ENCODE measurements at regions of chr1 and their contacts with region 1.

Region 1: DNA sequence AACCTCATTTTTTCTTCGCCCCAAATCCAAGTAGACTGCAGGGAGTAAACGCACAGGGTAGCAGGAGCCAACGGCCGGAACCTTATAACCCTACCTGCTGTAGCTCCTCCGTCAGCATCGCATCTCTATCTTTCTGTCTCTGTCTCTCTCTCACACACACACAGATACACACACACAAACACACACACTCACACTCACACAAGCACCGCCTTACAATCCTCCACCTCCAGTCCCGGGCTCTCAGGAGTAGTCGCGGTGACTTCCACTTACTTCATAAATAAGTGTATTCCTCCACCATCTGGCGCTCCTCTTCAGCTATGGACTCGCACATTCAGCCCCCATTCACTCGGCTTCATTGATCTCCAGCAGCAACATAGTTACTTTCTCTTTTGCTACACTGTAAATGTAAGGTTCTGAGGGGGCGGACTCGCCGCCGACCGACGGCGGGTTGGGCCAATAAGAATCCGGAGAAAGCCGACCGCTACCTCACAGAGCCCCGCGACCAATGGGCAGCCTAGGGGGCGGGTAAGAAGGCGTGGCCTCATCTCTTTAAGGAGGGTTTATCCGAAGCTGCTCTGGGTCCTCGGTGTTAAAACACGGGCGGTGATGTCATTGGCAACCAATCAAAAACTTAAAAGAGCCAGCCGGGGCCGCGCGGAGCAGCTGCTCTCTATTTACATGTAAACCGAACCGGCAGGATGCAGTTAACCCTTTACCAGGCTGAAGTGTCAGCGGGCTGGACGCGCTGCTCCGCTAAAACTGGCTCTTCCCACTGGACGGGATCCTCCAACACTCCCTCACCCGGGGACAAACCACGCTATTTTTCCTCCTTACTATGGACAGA is at the start of gene DUSP10:
- DNase-seq: peak; percentile 94
- ATAC-seq: peak; percentile 81
- H3K4me3 Mint-ChIP-seq: no peak within 1 kb of the TSS
- H3K27ac Mint-ChIP-seq: peak within 1 kb of the TSS; percentile 65
- H3K4me1 Mint-ChIP-seq: peaks cover 20% of the 10 kb centered on the region
- H3K27me3 Mint-ChIP-seq: no peaks in the 10 kb centered on the region
- CTCF ChIP-seq: no peak
- total RNA-seq, gene DUSP10: 36.6 and 39.5 TPM in 2 replicates

Region 2: DNA sequence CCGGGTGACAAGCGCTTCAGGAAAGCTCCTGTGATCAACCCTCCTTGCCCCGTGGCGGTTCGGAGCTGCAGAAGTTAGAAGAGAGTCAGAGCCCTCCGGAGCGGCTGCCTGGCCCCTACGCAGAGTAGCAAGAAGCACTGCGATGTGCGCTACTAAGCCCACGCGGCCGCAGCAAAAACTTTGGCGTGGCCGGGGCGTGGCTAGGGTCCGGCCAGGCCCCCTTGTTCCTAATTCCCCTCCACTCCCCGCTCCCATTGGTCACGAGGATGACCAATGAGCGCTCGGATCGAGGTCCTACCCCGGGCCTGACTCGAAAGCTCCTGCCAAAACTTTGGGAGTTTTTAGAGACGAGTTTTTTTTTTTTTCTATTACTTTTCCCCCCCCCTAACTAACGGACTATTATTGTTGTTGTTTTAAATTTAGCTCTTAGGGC is 862.8 kb before region 1 on chr1 and contains the start of gene HLX:
- CTCF ChIA-PET with region 1: interaction called, 3 read pairs
- POLR2A ChIA-PET with region 1: interaction called, 10 read pairs
- intact Hi-C with region 1: loop called (anchors 2 kb)
- DNase-seq: peak; percentile 75
- ATAC-seq: peak; percentile 80
- H3K4me3 Mint-ChIP-seq: peak within 1 kb of the TSS; percentile 94
- H3K27ac Mint-ChIP-seq: peak within 1 kb of the TSS; percentile 93
- H3K4me1 Mint-ChIP-seq: peaks cover 50% of the 10 kb centered on the region
- H3K27me3 Mint-ChIP-seq: peaks cover 2% of the 10 kb centered on the region
- CTCF ChIP-seq: no peak
- total RNA-seq, gene HLX: 3.2 and 4.6 TPM in 2 replicates

Region 3: DNA sequence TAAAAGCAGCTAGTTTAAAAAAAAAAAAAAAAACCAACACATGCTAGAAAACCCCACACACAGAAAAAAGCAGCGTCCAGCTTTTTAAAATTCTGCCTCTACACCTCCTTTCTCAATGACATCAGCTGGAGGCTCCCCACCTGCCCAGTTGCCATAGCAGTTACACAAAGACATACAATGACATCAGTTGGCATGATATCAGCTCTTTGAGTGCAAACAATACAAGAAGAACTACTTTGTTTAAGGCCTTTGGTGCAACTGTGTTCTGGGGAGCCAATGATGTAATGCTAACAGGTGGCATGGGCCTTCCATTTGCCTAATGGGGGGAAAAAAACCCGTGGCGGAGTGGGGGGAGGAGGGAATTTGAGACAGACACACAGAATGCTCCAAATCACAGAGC is 32.9 kb before region 1 on chr1:
- CTCF ChIA-PET with region 1: interaction called, 3 read pairs
- POLR2A ChIA-PET with region 1: interaction called, 50 read pairs
- intact Hi-C with region 1: loop called (anchors 1 kb)
- DNase-seq: peak; percentile 20
- ATAC-seq: peak; percentile 32
- H3K4me3 Mint-ChIP-seq: peak overlapping the region; percentile 37
- H3K27ac Mint-ChIP-seq: peak overlapping the region; percentile 82
- H3K4me1 Mint-ChIP-seq: peaks cover 60% of the 10 kb centered on the region
- H3K27me3 Mint-ChIP-seq: no peaks in the 10 kb centered on the region
- CTCF ChIP-seq: no peak

Region 4: DNA sequence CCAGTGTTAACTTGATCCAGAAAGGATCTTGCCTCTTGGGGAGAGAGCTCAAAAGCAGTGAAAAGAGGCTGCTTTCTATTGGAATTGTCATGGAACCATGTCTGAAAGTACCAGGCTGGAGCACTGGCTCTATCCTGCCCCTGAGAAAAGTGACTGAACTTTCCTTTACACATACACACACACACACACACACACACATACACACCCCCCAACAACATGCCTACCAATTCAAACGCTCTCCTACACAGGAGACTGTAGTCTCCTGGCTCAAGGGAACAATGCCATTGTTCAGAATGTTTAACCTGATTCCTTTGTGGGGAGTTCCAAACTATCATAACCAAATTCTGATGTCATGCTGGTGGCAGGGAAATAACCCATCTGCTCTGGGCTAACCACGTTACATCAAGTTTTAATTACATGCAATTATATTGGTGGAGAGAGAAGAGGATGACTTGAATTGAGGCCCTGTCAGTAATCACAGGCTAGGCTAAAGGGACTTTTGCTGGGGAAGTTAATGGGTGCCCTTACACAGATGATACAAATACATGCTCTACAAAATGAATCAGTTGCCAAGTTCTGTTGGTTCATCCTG is 52.2 kb after region 1 on chr1:
- CTCF ChIA-PET with region 1: interaction called, 5 read pairs
- POLR2A ChIA-PET with region 1: interaction called, 79 read pairs
- intact Hi-C with region 1: loop called (anchors 1 kb)
- DNase-seq: no peak
- ATAC-seq: peak; percentile 80
- H3K4me3 Mint-ChIP-seq: peak overlapping the region; percentile 83
- H3K27ac Mint-ChIP-seq: peak overlapping the region; percentile 97
- H3K4me1 Mint-ChIP-seq: peaks cover 55% of the 10 kb centered on the region
- H3K27me3 Mint-ChIP-seq: no peaks in the 10 kb centered on the region
- CTCF ChIP-seq: no peak

Region 5: DNA sequence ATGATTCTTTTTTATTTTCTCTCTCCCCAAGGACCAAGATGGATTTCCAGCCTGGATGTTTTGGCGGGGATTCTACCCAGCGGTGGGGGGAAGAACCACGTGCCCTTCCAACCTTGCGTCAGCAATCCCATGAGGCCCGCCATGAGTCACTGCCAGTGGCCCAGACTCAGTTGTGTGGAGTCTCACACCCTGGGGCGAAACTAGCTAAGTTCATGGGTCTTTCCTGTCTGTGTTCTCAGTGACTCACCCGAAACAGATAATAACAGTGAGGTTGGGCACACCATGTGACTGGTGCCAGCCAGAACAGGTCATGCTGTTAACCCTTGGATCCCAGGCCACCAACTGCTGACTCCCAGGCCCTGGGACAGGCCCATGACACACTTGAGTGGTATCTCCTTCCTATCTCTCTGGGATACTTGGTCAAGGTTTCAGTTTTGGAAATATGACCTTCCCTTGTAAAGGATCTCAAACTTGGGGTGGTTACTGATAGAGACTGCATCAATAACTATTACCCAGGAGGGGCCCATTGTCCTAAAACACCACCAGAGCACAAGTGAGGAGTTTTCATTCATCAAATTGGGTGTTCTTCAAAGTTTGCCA is 98.0 kb after region 1 on chr1:
- CTCF ChIA-PET with region 1: interaction called, 19 read pairs
- POLR2A ChIA-PET with region 1: interaction called, 132 read pairs
- intact Hi-C with region 1: loop called (anchors 1 kb)
- DNase-seq: peak; percentile 80
- ATAC-seq: peak; percentile 80
- H3K4me3 Mint-ChIP-seq: peak overlapping the region; percentile 29
- H3K27ac Mint-ChIP-seq: peak overlapping the region; percentile 95
- H3K4me1 Mint-ChIP-seq: peaks cover 50% of the 10 kb centered on the region
- H3K27me3 Mint-ChIP-seq: no peaks in the 10 kb centered on the region
- CTCF ChIP-seq: no peak

Region 6: DNA sequence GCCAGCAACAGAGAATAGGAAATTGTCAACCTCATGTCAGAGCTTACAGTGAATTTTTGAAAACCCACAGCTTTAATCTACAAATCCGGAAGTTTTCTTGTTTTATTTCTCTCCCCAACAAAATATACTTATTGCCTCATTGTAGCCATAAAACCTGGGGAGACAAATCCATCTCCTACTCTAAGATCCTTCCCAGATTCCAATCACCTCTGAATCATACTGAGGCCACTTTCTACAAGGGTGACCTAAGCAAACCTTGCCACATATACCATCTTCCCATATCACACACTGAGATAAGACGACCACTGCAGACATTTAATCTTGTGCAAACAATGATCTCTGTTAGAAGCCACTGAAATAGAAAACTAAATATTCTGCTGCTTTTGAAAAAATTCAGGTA is 171.4 kb after region 1 on chr1:
- CTCF ChIA-PET with region 1: no interaction called
- POLR2A ChIA-PET with region 1: no interaction called
- intact Hi-C with region 1: no loop called
- DNase-seq: no peak
- ATAC-seq: no peak
- H3K4me3 Mint-ChIP-seq: no peak overlapping the region
- H3K27ac Mint-ChIP-seq: no peak overlapping the region
- H3K4me1 Mint-ChIP-seq: peaks cover 16% of the 10 kb centered on the region
- H3K27me3 Mint-ChIP-seq: no peaks in the 10 kb centered on the region
- CTCF ChIP-seq: no peak

Region 7: GRCh38 chr1:222095606-222096475 is 353.9 kb after region 1 on chr1:
- CTCF ChIA-PET with region 1: no interaction called
- POLR2A ChIA-PET with region 1: no interaction called
- intact Hi-C with region 1: loop called (anchors 10 kb)
- DNase-seq: no peak
- ATAC-seq: peak; percentile 82
- H3K4me3 Mint-ChIP-seq: no peak overlapping the region
- H3K27ac Mint-ChIP-seq: no peak overlapping the region
- H3K4me1 Mint-ChIP-seq: no peaks in the 10 kb centered on the region
- H3K27me3 Mint-ChIP-seq: peaks cover 7% of the 10 kb centered on the region
- CTCF ChIP-seq: peak; percentile 53

Region 8: DNA sequence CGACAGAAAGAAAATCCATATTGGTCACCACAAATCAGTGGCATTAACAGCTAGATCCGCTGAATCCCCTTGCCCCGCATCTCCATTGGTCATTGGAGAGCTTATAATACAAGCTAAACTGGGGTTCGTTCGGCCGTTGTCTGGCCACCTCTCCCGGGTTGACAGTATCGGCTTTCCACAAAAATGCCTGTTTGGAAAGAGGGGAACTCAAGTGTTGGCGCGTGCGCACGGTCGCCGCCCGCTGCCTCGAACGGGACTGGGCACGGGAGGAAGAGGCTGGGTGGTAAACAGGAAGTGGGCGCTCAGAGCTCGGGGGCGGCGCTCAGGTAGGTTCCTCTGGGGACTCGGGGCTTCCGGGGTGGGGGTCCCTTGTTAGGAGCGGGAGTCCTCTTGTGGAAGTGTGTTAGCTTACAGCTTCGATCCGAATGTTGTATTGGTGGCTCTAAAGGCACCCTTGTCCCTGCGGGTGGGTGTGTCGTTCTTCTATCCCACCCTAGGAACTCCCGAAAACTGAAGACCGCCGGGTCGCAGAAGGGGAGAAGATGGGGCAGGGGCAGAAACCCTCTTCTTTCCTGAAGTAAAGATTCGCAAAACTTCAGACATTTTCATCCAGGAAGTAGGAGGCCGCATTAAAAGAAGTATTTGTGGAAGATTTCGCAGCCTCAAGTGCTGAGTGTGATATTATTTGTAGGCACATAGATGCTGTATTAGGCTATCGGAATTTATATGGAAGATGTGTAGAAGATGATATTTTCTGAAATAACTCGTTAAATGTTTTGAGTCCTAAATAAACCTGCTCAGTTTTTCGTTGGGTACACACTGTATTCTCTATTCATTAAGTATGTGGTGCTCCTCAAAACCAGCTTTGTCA is 971.4 kb after region 1 on chr1:
- CTCF ChIA-PET with region 1: no interaction called
- POLR2A ChIA-PET with region 1: no interaction called
- intact Hi-C with region 1: loop called (anchors 2 kb)
- DNase-seq: peak; percentile 90
- ATAC-seq: peak; percentile 73
- H3K4me3 Mint-ChIP-seq: peak overlapping the region; percentile 93
- H3K27ac Mint-ChIP-seq: peak overlapping the region; percentile 100
- H3K4me1 Mint-ChIP-seq: peaks cover 54% of the 10 kb centered on the region
- H3K27me3 Mint-ChIP-seq: no peaks in the 10 kb centered on the region
- CTCF ChIP-seq: no peak

Measured in activated B cell treated with CpG ODN at 0.5 μM for 24 hours (primary cell).